PC-9 (cell line): ENCODE measurements at regions of chr10 and their contacts with region 1.

Region 1: DNA sequence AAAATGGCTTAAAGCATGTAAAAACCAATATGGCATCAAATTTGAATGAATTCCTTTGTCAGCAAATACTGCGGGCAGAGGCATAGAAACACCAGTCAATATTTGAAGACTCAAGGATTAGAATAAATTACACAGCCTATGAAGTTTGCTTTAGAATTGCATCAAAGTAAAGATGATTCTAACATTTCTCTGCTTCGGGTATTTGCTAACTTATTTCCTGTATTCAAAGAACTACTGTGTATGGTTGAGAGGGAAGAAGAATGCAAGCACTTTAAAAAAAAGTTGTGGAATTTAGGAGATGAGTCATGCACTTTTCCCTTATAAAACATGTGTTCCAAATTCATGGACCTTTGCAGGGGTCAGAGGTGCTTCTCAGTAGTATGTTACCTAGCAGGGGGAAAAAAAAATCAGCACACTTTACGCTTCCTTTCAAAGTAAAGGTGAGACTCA is 90.1 kb downstream of the PIP4K2A start:
- DNase-seq: peak in 1 of 2 experiments; percentile 79
- H3K4me3 ChIP-seq: no peak overlapping the region
- H3K27ac ChIP-seq: peak overlapping the region; percentile 76
- H3K4me1 ChIP-seq: peaks cover 49% of the 10 kb centered on the region
- H3K27me3 ChIP-seq: no peaks in the 10 kb centered on the region
- CTCF ChIP-seq: no peak

Region 2: DNA sequence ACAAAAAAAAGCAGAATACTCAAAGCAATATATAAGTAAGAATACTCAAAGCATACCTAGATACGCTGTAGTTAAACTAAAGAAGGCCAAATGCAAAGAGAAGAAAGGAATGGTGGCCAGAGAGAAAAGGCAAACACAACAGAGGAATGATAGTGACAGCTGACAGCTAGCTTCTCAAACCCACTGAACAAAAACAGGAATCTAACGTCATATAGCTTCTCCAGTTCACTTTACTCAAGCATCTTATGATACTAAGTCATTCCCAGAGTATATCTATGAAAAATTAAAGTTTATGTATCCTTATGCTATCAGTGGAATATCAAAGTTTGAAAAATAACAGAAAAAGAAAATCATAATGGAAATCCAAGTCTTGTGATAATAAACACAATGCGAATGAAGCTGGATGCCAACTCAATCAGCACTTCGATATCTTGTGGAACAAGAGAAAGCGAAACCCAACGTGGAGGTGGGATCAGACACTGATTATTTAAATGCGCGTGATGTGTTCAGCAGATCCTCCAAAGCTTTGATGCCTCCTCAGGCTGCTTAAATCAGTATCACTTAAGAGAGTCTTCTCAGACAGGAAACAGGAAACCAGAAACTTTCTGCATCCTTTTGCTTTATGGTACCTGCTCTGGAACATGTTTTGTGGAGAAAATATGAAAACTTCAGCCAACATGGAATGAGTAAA is 12.7 kb before region 1 on chr10:
- CTCF ChIA-PET with region 1: interaction called, 3 read pairs
- POLR2A ChIA-PET with region 1: no interaction called
- intact Hi-C with region 1: loop called (anchors 1 kb)
- DNase-seq: no peak
- H3K4me3 ChIP-seq: no peak overlapping the region
- H3K27ac ChIP-seq: no peak overlapping the region
- H3K4me1 ChIP-seq: no peaks in the 10 kb centered on the region
- H3K27me3 ChIP-seq: no peaks in the 10 kb centered on the region
- CTCF ChIP-seq: no peak

Region 3: GRCh38 chr10:22673785-22674572 is 49.7 kb after region 1 on chr10:
- CTCF ChIA-PET with region 1: interaction called, 15 read pairs
- POLR2A ChIA-PET with region 1: no interaction called
- intact Hi-C with region 1: no loop called
- DNase-seq: no peak
- H3K4me3 ChIP-seq: no peak overlapping the region
- H3K27ac ChIP-seq: no peak overlapping the region
- H3K4me1 ChIP-seq: no peaks in the 10 kb centered on the region
- H3K27me3 ChIP-seq: no peaks in the 10 kb centered on the region
- CTCF ChIP-seq: no peak